Psoas muscle (tissue), 8 donors: ENCODE measurements at regions of chr7 and their contacts with region 1.

Region 1: GRCh38 chr7:80428161-80429054 is 83.5 kb downstream of the GNAT3 start:
- DNase-seq: no peak
- ATAC-seq: peak; percentile 79 to 99 (median 86)
- H3K4me3 ChIP-seq: peak overlapping the region; percentile 32
- H3K27ac ChIP-seq: no peak overlapping the region
- H3K4me1 ChIP-seq: no peaks in the 10 kb centered on the region
- H3K27me3 ChIP-seq: no peaks in the 10 kb centered on the region
- CTCF ChIP-seq: peak; percentile 79

Region 2: DNA sequence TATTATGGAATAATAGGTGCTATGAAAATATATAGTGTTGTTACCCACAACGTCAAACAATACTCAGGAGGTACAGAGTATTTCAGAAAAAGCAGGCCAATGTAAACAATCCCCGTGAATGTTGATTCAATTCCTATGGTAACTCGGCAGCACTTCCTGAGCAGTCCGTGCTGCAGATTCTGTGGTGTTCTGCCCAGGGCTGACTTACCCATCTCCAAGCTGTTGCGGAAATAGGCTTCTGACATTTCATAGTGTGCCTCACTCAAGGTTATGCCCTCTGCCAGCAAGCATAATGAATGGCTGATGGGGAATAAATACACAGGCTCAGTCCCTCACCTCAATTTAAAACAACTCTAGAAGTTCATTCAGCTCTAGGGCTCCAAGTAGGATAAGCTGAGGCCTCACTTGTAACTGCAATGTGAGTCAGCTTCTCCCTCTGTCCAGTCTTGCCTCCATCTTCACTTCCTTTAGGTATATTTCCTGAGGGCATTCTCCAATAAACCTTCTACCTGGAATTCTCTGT is 116.2 kb before region 1 on chr7:
- intact Hi-C with region 1: no loop called
- DNase-seq: no peak
- ATAC-seq: no peak
- H3K4me3 ChIP-seq: no peak overlapping the region
- H3K27ac ChIP-seq: no peak overlapping the region
- H3K4me1 ChIP-seq: no peaks in the 10 kb centered on the region
- H3K27me3 ChIP-seq: no peaks in the 10 kb centered on the region
- CTCF ChIP-seq: no peak

Region 3: DNA sequence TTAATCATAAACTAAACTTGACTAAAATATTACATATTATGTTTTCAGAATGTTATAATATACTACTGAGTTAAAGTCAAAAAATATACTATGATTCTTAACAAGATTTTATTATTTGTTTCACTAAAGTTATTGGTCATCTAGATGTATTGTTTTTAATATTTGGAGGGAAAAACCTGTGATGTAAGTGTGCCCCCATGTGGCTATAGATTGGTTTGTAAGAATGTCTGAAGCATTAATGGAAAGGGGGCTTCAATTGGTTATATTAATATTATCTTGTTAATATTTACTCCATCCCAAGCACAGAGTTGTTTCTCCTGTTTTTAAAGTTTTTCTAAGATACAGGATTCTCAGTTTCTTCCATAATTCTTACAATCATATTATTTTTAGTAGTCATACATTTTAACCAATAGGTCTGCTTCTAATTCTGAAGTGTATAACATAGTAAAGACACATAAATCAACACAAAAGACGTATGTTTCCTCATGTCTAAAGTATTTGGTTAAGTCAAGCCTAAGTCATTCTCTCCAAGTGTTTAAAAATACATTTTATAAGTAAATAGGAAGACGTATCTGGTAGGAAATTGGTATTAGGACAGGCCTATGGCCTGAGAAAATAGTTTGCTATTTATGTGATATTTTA is 25.4 kb after region 1 on chr7:
- intact Hi-C with region 1: loop called in 1 of 2 experiments (anchors 2 kb)
- DNase-seq: no peak
- ATAC-seq: no peak
- H3K4me3 ChIP-seq: no peak overlapping the region
- H3K27ac ChIP-seq: no peak overlapping the region
- H3K4me1 ChIP-seq: no peaks in the 10 kb centered on the region
- H3K27me3 ChIP-seq: no peaks in the 10 kb centered on the region
- CTCF ChIP-seq: peak; percentile 47

Region 4: DNA sequence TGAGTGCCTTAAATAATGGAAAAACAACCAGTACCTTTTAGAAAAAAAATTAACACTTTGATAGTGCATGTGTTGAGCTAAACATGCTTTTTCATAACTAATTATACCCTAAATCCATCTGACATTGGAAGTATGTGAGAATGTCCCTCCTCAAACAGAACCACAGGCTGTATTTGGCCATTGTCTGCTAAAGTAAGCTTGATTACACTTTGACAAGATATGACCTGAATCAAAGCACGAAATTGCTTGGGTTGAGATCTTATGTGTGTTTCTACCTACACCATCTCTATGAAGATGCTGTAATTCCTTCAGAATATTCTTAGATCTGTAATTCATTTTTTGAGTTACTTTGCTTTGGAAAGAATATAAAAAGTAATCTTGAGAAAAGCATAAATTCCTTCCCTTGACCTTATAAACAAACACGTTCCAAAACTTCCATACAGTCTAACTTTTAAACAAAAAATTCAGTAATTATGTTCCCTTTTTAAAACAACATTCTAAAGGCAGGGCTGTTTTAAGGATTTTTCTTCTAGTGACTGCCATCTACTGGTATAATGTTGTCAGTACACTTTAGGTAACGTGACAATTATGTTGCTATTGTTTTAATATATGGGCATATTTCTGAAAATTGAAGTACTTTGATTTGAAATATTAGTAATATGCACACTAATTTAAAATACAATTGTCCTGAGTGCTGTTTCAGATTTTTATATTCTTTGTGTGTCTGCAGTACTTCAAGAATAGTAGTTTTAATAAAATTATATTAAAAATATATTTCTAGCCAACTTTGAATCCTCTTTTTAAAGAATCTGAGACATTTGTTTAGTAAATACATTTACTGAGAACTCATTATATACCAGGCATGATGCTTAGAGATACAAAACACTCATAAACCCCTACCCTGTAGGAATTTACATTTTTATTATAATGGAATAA is 231.0 kb after region 1 on chr7:
- intact Hi-C with region 1: loop called (anchors 1 to 5 kb)
- DNase-seq: no peak
- ATAC-seq: peak in 3 of 4 donors; percentile 52 to 72 (median 65)
- H3K4me3 ChIP-seq: no peak overlapping the region
- H3K27ac ChIP-seq: peak overlapping the region; percentile 43
- H3K4me1 ChIP-seq: peaks cover 6% of the 10 kb centered on the region
- H3K27me3 ChIP-seq: no peaks in the 10 kb centered on the region
- CTCF ChIP-seq: peak; percentile 79